Activated CD4-positive, alpha-beta T cell treated with anti-CD3 and anti-CD28 coated beads for 36 hours (primary cell): ENCODE measurements at regions of chr9 and their contacts with region 1.

Region 1: GRCh38 chr9:128067876-128068613 is at the start of gene SLC25A25:
- DNase-seq: peak; percentile 100
- ATAC-seq: peak; percentile 84
- H3K4me3 Mint-ChIP-seq: no peak within 1 kb of the TSS
- H3K27ac Mint-ChIP-seq: peak within 1 kb of the TSS; percentile 90
- H3K4me1 Mint-ChIP-seq: peaks cover 53% of the 10 kb centered on the region
- H3K27me3 Mint-ChIP-seq: no peaks in the 10 kb centered on the region
- total RNA-seq, gene SLC25A25: 6.9 to 10.8 TPM

Region 2: DNA sequence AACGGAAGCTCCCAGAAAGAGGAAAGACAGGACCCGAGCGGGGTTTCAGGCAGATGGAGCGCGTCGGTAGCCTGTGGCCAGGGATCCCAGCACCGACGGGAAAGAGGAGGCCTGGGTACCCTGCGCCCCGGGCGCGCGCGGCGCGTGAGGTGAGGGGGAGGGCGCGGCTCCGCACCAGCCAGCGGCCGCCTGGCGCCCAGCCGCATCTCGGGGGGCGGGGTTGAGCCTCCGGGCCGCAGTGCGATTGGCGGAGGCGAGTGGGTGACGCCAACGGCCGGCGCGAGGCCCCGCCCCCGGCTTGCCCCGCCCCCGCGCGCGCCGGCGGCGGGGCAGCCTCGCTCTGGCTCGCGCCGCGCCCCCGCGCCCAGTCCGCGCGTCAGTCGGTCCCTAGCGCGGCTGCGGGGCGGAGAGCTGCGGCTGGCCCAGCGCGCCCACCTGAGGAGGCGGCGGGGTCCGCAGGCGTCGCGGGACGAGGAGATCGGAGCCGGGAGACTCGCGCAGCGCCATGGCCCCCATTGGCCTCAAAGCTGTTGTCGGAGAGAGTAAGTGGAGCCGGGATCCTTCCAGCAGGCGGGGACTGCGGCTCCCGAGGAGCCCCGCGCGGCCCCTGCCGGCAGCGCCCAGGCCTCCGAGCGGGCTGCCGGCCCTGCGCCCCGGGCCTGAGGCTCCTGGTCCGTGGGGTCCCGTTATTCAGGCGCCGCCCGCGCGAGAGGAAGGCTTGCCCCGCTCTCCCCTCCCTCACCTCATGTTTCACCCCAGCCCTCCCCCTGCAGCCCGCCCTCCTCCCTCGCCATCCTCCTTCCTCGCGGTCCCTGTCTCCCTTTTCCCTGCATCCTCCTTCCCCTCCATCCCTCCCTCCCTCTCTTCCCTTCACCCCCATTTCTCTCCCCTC is 455.9 kb before region 1 on chr9 and contains the start of gene STXBP1:
- CTCF ChIA-PET with region 1: no interaction called
- POLR2A ChIA-PET with region 1: no interaction called
- intact Hi-C with region 1: loop called in 1 of 2 experiments (anchors 2 kb)
- DNase-seq: peak; percentile 92
- ATAC-seq: peak; percentile 87
- H3K4me3 Mint-ChIP-seq: peak within 1 kb of the TSS; percentile 85
- H3K27ac Mint-ChIP-seq: peak within 1 kb of the TSS; percentile 71
- H3K4me1 Mint-ChIP-seq: peaks cover 26% of the 10 kb centered on the region
- H3K27me3 Mint-ChIP-seq: peaks cover 32% of the 10 kb centered on the region
- total RNA-seq, gene STXBP1: 15.9 to 18.1 TPM

Region 3: DNA sequence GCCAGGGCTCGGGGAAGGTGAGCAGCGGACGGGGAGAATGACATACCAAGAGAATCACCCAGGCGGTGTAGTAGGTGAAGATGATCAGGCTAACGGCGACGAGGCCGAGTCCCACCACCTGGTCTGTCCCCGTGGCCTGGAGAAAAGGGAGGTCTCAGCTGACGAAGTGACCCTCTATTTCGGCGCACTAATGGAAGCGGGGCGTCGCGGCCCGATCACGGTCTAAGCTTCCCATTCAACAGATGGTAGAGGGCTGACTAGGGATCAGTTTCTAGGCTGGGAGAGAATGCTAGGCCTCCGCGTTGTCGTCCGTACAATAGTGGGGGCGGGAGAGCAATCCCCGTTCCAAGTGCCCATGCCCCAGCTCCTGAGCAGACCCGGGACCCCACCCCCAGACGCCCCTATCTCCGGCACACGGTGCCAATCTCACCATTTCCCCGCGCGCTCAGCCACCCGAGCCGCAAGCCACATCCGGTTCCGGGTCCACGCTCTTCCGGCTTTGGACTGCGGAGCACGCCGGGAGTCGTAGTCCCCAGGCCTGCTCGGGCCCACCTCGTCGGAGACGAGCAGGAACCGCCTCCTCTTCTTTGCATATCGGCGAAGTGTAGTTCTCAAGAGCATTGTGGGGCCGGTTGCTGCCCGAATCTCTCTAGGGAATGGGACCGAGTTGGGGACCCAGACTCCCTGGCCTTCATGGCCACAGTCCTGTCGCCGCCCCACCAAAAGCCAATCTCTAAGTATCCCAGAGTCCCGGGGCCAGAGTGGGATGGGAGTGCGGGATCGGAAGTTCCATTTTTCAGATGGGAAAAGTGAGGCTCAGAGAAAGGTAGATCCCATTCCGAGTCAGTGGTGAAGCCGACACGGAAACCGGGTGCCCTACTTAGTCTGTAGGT is 130.4 kb before region 1 on chr9 and contains the start of gene DPM2:
- CTCF ChIA-PET with region 1: interaction called, 9 read pairs
- POLR2A ChIA-PET with region 1: no interaction called
- intact Hi-C with region 1: loop called in 1 of 2 experiments (anchors 2 kb)
- DNase-seq: peak; percentile 93
- ATAC-seq: peak; percentile 92
- H3K4me3 Mint-ChIP-seq: peak within 1 kb of the TSS; percentile 94
- H3K27ac Mint-ChIP-seq: peak within 1 kb of the TSS; percentile 93
- H3K4me1 Mint-ChIP-seq: peaks cover 34% of the 10 kb centered on the region
- H3K27me3 Mint-ChIP-seq: no peaks in the 10 kb centered on the region
- total RNA-seq, gene DPM2: 44.1 to 46.6 TPM

Region 4: GRCh38 chr9:128026773-128027541 is 41.1 kb before region 1 on chr9:
- CTCF ChIA-PET with region 1: interaction called, 10 read pairs
- POLR2A ChIA-PET with region 1: interaction called, 4 read pairs
- intact Hi-C with region 1: loop called (anchors 2 to 5 kb)
- DNase-seq: peak; percentile 79
- ATAC-seq: peak; percentile 62
- H3K4me3 Mint-ChIP-seq: peak overlapping the region; percentile 65
- H3K27ac Mint-ChIP-seq: peak overlapping the region; percentile 94
- H3K4me1 Mint-ChIP-seq: peaks cover 91% of the 10 kb centered on the region
- H3K27me3 Mint-ChIP-seq: peaks cover 2% of the 10 kb centered on the region

Region 5: DNA sequence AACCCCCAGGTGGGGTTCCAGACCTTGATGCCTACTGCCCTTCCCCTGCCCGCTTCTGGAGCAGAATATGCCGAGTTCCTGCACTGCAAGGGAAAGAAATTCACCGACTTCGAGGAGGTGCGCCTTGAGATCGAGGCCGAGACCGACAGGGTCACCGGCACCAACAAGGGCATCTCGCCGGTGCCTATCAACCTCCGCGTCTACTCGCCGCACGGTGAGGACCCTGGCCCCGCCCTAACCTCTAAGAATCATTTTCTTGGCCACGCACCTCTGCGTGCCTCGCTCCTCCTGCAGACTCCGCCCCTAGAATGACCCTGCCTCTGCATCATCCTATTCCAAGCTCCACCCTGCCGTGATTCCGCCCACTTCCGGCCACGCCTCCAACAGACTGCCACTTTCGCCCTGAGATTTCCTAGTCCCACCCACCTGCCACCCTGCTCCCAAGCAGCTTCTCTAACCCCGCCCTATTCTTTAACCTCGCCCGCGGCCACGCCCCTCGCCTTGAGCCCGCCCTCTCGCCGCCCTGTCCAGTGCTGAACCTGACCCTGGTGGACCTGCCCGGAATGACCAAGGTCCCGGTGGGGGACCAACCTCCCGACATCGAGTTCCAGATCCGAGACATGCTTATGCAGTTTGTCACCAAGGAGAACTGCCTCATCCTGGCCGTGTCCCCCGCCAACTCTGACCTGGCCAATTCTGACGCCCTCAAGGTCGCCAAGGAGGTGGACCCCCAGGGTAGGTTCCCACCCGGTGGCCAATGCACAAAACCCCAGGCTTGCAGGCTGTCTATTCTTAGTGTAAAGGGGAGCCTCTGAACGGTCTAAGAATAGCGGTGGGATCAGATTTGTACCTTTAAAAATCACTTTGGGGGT is 150.7 kb after region 1 on chr9:
- CTCF ChIA-PET with region 1: no interaction called
- POLR2A ChIA-PET with region 1: no interaction called
- intact Hi-C with region 1: loop called in 1 of 2 experiments (anchors 1 kb)
- DNase-seq: peak; percentile 97
- ATAC-seq: peak; percentile 98
- H3K4me3 Mint-ChIP-seq: peak overlapping the region; percentile 71
- H3K27ac Mint-ChIP-seq: peak overlapping the region; percentile 74
- H3K4me1 Mint-ChIP-seq: peaks cover 11% of the 10 kb centered on the region
- H3K27me3 Mint-ChIP-seq: no peaks in the 10 kb centered on the region

Region 6: GRCh38 chr9:128333451-128333869 is 265.4 kb after region 1 on chr9:
- CTCF ChIA-PET with region 1: no interaction called
- POLR2A ChIA-PET with region 1: no interaction called
- intact Hi-C with region 1: no loop called
- DNase-seq: no peak
- ATAC-seq: no peak
- H3K4me3 Mint-ChIP-seq: no peak overlapping the region
- H3K27ac Mint-ChIP-seq: no peak overlapping the region
- H3K4me1 Mint-ChIP-seq: no peaks in the 10 kb centered on the region
- H3K27me3 Mint-ChIP-seq: no peaks in the 10 kb centered on the region

Region 7: DNA sequence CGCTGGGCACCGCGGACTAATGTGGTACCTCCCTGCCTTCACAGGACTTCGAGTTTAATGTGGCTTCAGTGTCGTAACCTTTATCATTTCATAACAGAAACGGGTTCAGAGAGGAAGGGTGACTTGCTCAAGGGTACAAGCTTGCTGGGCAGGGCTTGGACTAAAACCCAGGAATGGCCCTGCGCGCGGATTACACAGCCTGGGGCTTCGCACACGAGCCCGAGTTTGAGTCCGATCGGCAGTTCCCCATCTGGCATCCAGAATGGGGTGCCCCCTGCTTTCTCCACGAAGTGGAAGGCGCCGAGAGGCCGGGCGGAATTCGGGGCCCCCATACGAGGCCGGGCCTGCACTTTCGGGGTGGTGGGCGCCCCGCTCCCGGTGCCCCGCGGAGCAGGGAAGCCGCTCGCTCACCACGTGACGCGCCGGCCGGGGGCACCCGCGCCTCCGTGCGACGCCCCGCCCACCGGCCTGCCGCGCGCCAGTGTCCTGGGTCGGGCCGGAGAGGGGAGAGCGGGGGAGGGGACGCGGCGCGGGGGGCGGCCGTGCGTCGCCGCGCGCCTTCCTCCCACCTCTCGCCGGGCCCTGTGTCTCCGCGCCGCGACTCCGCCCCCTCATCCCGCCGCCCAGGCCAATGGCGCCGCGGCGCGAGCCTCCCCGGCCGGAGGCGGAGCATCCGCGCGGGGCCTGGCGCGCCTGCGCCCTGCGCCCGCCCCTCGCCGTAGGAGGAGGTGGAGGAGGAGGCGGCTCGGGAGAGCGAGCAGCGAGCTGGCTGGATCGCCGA is 620.7 kb after region 1 on chr9 and contains the start of gene SET:
- CTCF ChIA-PET with region 1: no interaction called
- POLR2A ChIA-PET with region 1: no interaction called
- intact Hi-C with region 1: loop called in 1 of 2 experiments (anchors 2 kb)
- DNase-seq: peak; percentile 96
- ATAC-seq: peak; percentile 71
- H3K4me3 Mint-ChIP-seq: peak within 1 kb of the TSS; percentile 99
- H3K27ac Mint-ChIP-seq: peak within 1 kb of the TSS; percentile 94
- H3K4me1 Mint-ChIP-seq: peaks cover 61% of the 10 kb centered on the region
- H3K27me3 Mint-ChIP-seq: no peaks in the 10 kb centered on the region
- total RNA-seq, gene SET: 673 to 682 TPM